ENCODE measurements at regions of chr9 and their contacts with region 1.

Region 1: GRCh38 chr9:31916591-31917241 is 467.7 kb upstream of the ACO1 start:
- DNase-seq: peak in 1 of 2 experiments; percentile 33
- H3K4me3 ChIP-seq: no peak overlapping the region
- H3K4me3 Mint-ChIP-seq: no peak overlapping the region
- H3K27ac Mint-ChIP-seq: no peak overlapping the region
- H3K4me1 ChIP-seq: no peaks in the 10 kb centered on the region
- H3K4me1 Mint-ChIP-seq: no peaks in the 10 kb centered on the region
- H3K27me3 ChIP-seq: no peaks in the 10 kb centered on the region
- H3K27me3 Mint-ChIP-seq: no peaks in the 10 kb centered on the region
- CTCF ChIP-seq: peak in 1 of 2 experiments; percentile 45

Region 2: GRCh38 chr9:31996322-31996721 is 79.6 kb after region 1 on chr9:
- CTCF ChIA-PET with region 1: no interaction called
- POLR2A ChIA-PET with region 1: no interaction called
- intact Hi-C with region 1: loop called (anchors 10 kb)
- DNase-seq: no peak
- H3K4me3 ChIP-seq: no peak overlapping the region
- H3K4me3 Mint-ChIP-seq: no peak overlapping the region
- H3K27ac Mint-ChIP-seq: no peak overlapping the region
- H3K4me1 ChIP-seq: no peaks in the 10 kb centered on the region
- H3K4me1 Mint-ChIP-seq: no peaks in the 10 kb centered on the region
- H3K27me3 ChIP-seq: no peaks in the 10 kb centered on the region
- H3K27me3 Mint-ChIP-seq: no peaks in the 10 kb centered on the region
- CTCF ChIP-seq: no peak

Measured in Caco-2 (cell line).